A549 (cell line): ENCODE measurements at regions of chr10 and their contacts with region 1.

Region 1: GRCh38 chr10:132023092-132023811 is 41.5 kb upstream of the BNIP3 start:
- DNase-seq: peak; percentile 83 to 85
- ATAC-seq: peak; percentile 87 to 95
- H3K4me3 ChIP-seq: peak overlapping the region; percentile 39
- H3K27ac ChIP-seq: peak overlapping the region; percentile 31 to 49; a peak in 5 of 6 replicates
- H3K4me1 ChIP-seq: peaks cover 5% of the 10 kb centered on the region; the same call in 1 of the 3 replicates
- CTCF ChIP-seq: peak; percentile 92
- EP300 ChIP-seq: no peak
- POLR2A ChIP-seq: no peak
- RAD21 ChIP-seq: peak; percentile 89 to 92

Region 2: DNA sequence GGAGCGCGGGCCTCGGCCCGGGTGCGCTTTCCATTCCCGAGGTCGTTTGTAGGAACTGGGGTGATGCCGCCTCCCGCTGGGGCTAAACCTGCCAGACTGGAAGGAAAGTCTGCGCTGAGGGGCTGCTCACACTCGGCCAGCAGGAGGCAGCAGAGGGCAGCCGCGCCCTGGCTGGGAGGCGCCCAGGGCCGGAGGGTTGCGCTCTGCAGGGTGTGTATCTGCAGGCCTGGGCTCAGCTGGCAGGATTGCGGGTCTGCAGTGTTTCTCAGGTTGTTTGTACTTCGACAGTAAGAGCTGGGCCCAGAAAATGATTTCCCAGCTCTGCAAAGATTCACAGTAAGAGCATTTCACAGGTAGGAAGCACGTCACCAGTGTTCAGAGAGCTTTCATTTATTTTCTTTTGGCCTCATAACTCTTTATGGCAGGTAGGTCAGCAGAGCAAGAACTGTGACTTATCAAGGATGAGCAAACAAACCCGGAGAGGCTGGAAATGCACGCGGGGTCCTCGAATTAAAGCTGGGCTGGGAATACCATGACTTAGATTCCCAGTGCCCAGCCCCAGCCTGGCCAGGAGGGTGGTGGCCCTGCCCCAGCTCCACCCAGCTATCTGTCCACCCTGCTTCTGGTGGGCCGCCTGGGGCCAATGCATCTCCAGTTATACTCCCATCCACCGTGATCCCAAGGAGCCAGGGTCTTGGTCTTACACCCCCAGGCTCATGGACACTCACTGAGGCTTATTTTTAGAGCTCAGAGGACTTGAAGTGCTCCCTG is 137.7 kb before region 1 on chr10:
- CTCF ChIA-PET with region 1: interaction called, 63 read pairs
- POLR2A ChIA-PET with region 1: no interaction called
- DNase-seq: peak; percentile 76 to 84
- ATAC-seq: peak; percentile 91 to 99
- H3K4me3 ChIP-seq: no peak overlapping the region
- H3K27ac ChIP-seq: no peak overlapping the region
- H3K4me1 ChIP-seq: peaks cover 5% of the 10 kb centered on the region; the same call in 1 of the 3 replicates
- CTCF ChIP-seq: peak; percentile 94
- EP300 ChIP-seq: no peak
- POLR2A ChIP-seq: no peak
- RAD21 ChIP-seq: peak; percentile 88 to 89

Region 3: DNA sequence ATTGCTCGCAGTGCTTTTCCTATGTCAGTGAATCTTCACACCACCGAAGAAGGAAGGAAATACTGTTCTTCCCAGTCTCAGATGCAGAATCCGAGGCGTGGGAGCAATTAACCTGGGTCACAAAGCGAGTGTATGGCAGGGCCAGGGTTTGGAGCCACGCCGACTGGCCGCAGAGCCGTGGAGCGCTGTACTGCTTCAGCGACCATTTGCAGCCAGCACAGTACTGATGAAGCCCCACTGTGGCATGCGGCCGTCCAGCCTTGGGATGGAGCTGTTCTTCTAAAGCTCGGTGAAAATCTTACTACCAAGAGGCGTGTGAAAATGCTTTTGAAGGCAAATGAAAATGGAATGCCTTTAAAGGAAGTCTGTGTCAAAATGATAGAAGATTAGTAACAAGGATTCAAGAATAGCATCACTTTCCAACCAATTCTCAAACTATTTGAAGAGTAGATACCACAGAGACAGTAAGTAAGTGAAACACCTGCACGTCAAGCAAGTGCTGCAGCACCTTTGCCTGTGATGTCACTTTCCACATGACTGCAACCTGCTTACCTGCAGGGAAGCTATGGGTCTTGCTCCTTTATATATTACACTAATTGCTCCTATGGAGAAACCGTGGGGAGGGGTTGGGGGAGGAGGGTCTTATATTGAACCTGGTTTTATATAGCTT is 117.5 kb before region 1 on chr10:
- CTCF ChIA-PET with region 1: interaction called, 12 read pairs
- POLR2A ChIA-PET with region 1: no interaction called
- DNase-seq: no peak
- ATAC-seq: no peak
- H3K4me3 ChIP-seq: no peak overlapping the region
- H3K27ac ChIP-seq: peak overlapping the region in 1 of 2 experiments; percentile 12; a peak in 2 of 6 replicates
- H3K4me1 ChIP-seq: peaks cover 73% of the 10 kb centered on the region
- CTCF ChIP-seq: no peak
- EP300 ChIP-seq: no peak
- POLR2A ChIP-seq: no peak
- RAD21 ChIP-seq: no peak

Region 4: DNA sequence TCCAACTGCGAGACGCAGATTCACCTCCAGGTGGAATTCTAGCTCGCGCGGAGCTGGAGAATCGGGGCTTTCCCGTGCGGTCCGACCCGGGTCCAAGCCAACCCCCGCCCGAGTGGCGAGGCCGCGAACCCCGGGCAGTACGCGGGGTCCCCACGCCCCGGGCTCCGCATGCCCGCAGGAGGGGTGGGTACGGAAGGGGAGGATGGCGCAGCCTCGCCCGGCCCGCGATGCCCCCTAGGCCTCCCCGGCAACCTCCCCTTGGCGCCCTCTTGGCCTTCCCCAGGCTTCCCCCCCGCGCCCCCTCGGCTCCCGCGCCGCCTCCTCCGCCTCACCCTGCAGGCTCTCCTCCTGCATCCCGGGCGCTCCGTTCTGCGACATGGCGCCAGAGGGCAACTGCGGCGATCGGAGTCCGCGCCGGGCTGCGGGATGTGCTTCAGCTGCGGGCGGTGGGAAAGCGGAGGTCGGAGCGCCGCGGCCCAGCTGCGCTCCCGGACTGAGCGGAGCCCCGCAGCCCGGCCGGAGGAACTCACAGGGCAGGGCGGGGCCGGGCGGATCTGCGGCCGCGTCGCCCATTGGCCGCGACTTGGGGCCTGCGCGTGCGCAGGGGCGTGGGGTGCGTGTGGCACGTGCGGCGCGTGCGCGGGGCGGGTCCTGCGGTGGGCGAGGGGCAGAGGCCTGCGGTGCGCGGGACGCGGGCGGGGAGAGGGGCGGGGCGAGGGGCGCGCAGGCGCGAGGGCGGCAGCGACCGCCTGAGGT is 41.6 kb before region 1 on chr10 and contains the start of gene BNIP3:
- CTCF ChIA-PET with region 1: interaction called, 22 read pairs
- POLR2A ChIA-PET with region 1: no interaction called
- DNase-seq: peak; percentile 94 to 95
- ATAC-seq: peak; percentile 90 to 95
- H3K4me3 ChIP-seq: peak within 1 kb of the TSS; percentile 72
- H3K27ac ChIP-seq: peak within 1 kb of the TSS; percentile 89 to 96
- H3K4me1 ChIP-seq: peaks cover 28% of the 10 kb centered on the region
- CTCF ChIP-seq: no peak
- EP300 ChIP-seq: no peak
- POLR2A ChIP-seq: peak; percentile 76
- RAD21 ChIP-seq: no peak; a peak in 1 of 5 replicates
- polyA plus RNA-seq, gene BNIP3: 46.6 and 51.2 TPM in 2 replicates

Region 5: GRCh38 chr10:132036153-132036886 is 13.1 kb after region 1 on chr10:
- CTCF ChIA-PET with region 1: interaction called, 22 read pairs
- POLR2A ChIA-PET with region 1: no interaction called
- DNase-seq: peak; percentile 52 to 57
- ATAC-seq: peak; percentile 71 to 79
- H3K4me3 ChIP-seq: peak overlapping the region; percentile 82
- H3K27ac ChIP-seq: peak overlapping the region; percentile 87 to 91
- H3K4me1 ChIP-seq: 0 out of 3 replicates have a peak, but pooled peaks cover 3% of the 10 kb centered on the region
- CTCF ChIP-seq: no peak
- EP300 ChIP-seq: no peak
- POLR2A ChIP-seq: no peak
- RAD21 ChIP-seq: no peak

Region 6: GRCh38 chr10:132059760-132060508 is 36.7 kb after region 1 on chr10:
- CTCF ChIA-PET with region 1: interaction called, 15 read pairs
- POLR2A ChIA-PET with region 1: no interaction called
- DNase-seq: no peak
- ATAC-seq: no peak
- H3K4me3 ChIP-seq: no peak overlapping the region
- H3K27ac ChIP-seq: no peak overlapping the region
- H3K4me1 ChIP-seq: peaks cover 5% of the 10 kb centered on the region
- CTCF ChIP-seq: no peak
- EP300 ChIP-seq: no peak
- POLR2A ChIP-seq: no peak
- RAD21 ChIP-seq: no peak